Activated CD4-positive, alpha-beta T cell treated with anti-CD3 and anti-CD28 coated beads, Interleukin-2, amount 10 ng/mL, durations not matched to agents 7 days and 5 days (primary cell): ENCODE measurements at regions of chr5 and their contacts with region 1.

Region 1: GRCh38 chr5:143592648-143593047 is 189.2 kb upstream of the NR3C1 start:
- DNase-seq: peak; percentile 24
- H3K4me3 Mint-ChIP-seq: no peak overlapping the region
- H3K27ac Mint-ChIP-seq: no peak overlapping the region
- H3K4me1 Mint-ChIP-seq: peaks cover 32% of the 10 kb centered on the region
- H3K27me3 Mint-ChIP-seq: no peaks in the 10 kb centered on the region

Region 2: GRCh38 chr5:143605403-143606005 is 12.9 kb after region 1 on chr5:
- CTCF ChIA-PET with region 1: interaction called, 11 read pairs
- POLR2A ChIA-PET with region 1: no interaction called
- DNase-seq: peak; percentile 63
- H3K4me3 Mint-ChIP-seq: peak overlapping the region; percentile 13
- H3K27ac Mint-ChIP-seq: peak overlapping the region; percentile 88
- H3K4me1 Mint-ChIP-seq: peaks cover 34% of the 10 kb centered on the region
- H3K27me3 Mint-ChIP-seq: peaks cover 4% of the 10 kb centered on the region